GM12878 (cell line): ENCODE measurements at regions of chr18 and their contacts with region 1.

Region 1: GRCh38 chr18:58117786-58118403 is 73.9 kb downstream of the NEDD4L start:
- DNase-seq: no peak
- ATAC-seq: no peak
- H3K4me3 ChIP-seq: no peak overlapping the region
- H3K27ac ChIP-seq: no peak overlapping the region
- H3K4me1 ChIP-seq: peaks cover 9% of the 10 kb centered on the region
- H3K27me3 ChIP-seq: no peaks in the 10 kb centered on the region
- CTCF ChIP-seq: no peak
- EP300 ChIP-seq: no peak
- POLR2A ChIP-seq: no peak
- RAD21 ChIP-seq: no peak

Region 2: GRCh38 chr18:57497372-57498294 is 620.3 kb before region 1 on chr18:
- CTCF ChIA-PET with region 1: no interaction called
- POLR2A ChIA-PET with region 1: no interaction called
- RAD21 ChIA-PET with region 1: no interaction called
- SMC1A ChIA-PET with region 1: no interaction called
- in situ Hi-C with region 1: no loop called
- intact Hi-C with region 1: no loop called
- DNase-seq: no peak
- ATAC-seq: no peak
- H3K4me3 ChIP-seq: no peak overlapping the region
- H3K27ac ChIP-seq: no peak overlapping the region
- H3K4me1 ChIP-seq: no peaks in the 10 kb centered on the region
- H3K27me3 ChIP-seq: no peaks in the 10 kb centered on the region; a peak in 2 of 4 replicates
- CTCF ChIP-seq: no peak
- EP300 ChIP-seq: no peak
- POLR2A ChIP-seq: no peak
- RAD21 ChIP-seq: no peak

Region 3: GRCh38 chr18:57881818-57882413 is 236.0 kb before region 1 on chr18:
- CTCF ChIA-PET with region 1: interaction called, 16 read pairs
- POLR2A ChIA-PET with region 1: no interaction called
- RAD21 ChIA-PET with region 1: interaction called, 10 read pairs
- SMC1A ChIA-PET with region 1: interaction called, 16 read pairs
- in situ Hi-C with region 1: loop called (anchors 10 kb)
- intact Hi-C with region 1: loop called (anchors 5 kb)
- DNase-seq: peak; percentile 32
- ATAC-seq: peak; percentile 98
- H3K4me3 ChIP-seq: no peak overlapping the region
- H3K27ac ChIP-seq: no peak overlapping the region
- H3K4me1 ChIP-seq: no peaks in the 10 kb centered on the region
- H3K27me3 ChIP-seq: no peaks in the 10 kb centered on the region
- CTCF ChIP-seq: peak; percentile 89 to 94 (median 90); a peak in 5 of 6 replicates
- EP300 ChIP-seq: no peak
- POLR2A ChIP-seq: no peak
- RAD21 ChIP-seq: peak; percentile 93

Region 4: DNA sequence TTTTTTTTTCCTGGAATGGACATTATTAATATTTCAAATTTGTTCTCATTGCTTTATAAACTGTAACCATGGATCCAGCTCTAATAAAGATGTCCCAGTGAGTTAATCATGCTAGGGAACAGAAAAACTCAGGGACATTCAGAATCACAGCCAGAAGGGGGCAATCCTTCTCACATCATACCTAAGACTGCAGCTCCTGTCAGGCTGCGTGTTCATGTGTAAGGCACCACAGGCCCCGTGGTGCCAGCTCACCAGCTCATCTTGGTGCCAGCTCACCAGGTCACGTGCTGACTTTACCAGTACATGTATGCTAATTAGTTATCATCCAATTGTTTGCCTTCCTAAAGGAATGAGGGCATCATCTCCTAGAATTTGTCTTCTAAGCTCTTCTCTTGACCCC is 158.6 kb before region 1 on chr18:
- CTCF ChIA-PET with region 1: interaction called, 30 read pairs
- POLR2A ChIA-PET with region 1: no interaction called
- RAD21 ChIA-PET with region 1: interaction called, 34 read pairs
- SMC1A ChIA-PET with region 1: interaction called, 15 read pairs
- in situ Hi-C with region 1: no loop called
- intact Hi-C with region 1: loop called (anchors 1 kb)
- DNase-seq: no peak
- ATAC-seq: peak; percentile 86
- H3K4me3 ChIP-seq: no peak overlapping the region
- H3K27ac ChIP-seq: no peak overlapping the region
- H3K4me1 ChIP-seq: no peaks in the 10 kb centered on the region
- H3K27me3 ChIP-seq: 0 out of 4 replicates have a peak, but pooled peaks cover 0 to 2% of the 10 kb centered on the region in 2 experiments
- CTCF ChIP-seq: peak; percentile 45 to 54 (median 49); a peak in 5 of 6 replicates
- EP300 ChIP-seq: no peak
- POLR2A ChIP-seq: no peak
- RAD21 ChIP-seq: 0 out of 2 replicates have a peak, but pooled peaks have one; percentile 27

Region 5: DNA sequence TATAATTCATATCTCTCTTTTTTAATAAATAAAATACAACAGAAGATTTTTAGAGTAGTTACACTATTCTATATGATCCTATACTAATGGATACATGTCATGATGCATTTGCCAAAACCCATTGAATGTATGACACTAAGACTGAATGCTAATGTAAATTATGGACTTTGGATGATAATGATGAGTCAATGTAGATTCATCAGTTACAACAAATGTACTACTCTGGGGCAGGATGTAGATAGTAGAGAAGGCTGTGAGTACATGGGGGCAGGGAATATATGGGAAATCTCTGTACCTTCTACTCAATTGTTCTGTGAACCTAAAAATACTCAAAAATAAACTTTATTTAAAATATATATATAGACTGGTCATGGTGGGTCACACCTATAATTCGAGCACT is 119.4 kb before region 1 on chr18:
- CTCF ChIA-PET with region 1: no interaction called
- POLR2A ChIA-PET with region 1: no interaction called
- RAD21 ChIA-PET with region 1: no interaction called
- SMC1A ChIA-PET with region 1: no interaction called
- in situ Hi-C with region 1: no loop called
- intact Hi-C with region 1: no loop called
- DNase-seq: no peak
- ATAC-seq: no peak
- H3K4me3 ChIP-seq: no peak overlapping the region
- H3K27ac ChIP-seq: no peak overlapping the region
- H3K4me1 ChIP-seq: no peaks in the 10 kb centered on the region
- H3K27me3 ChIP-seq: no peaks in the 10 kb centered on the region; a peak in 1 of 4 replicates
- CTCF ChIP-seq: no peak
- EP300 ChIP-seq: no peak
- POLR2A ChIP-seq: no peak
- RAD21 ChIP-seq: no peak

Region 6: DNA sequence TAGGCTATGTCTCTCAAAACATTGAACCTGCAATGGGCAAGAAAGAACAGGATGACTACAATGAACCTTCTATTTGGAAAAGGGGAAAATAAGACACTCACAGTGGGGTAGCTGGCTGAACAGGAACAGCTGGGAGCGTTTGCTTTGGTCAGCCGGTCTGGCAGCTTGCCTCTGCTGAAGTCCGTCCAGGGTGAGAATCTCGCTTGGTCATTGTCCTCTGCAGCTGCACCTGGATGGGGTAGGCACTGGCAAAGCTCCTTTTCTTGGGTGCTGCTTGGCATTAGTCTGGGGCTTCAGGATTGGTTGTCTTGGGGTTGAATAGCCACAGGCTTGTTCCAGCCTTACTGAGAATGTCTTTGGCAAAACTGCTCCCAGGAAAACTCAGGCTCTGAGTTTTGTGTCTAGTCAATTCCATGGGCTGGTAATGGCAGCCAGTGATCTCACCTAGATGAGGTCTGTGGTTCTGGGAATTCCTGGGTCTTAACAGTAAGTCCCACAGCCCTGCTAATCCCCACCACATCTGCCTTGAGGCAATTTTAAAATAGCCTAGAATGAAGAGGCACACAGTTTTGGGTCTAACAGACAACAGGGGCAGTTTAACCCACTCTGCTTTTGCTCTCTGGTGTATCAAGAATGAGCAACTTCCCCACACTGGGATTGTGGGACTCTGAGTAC is 60.5 kb before region 1 on chr18:
- CTCF ChIA-PET with region 1: interaction called, 113 read pairs
- POLR2A ChIA-PET with region 1: interaction called, 6 read pairs
- RAD21 ChIA-PET with region 1: interaction called, 44 read pairs
- SMC1A ChIA-PET with region 1: interaction called, 55 read pairs
- in situ Hi-C with region 1: no loop called
- intact Hi-C with region 1: no loop called
- DNase-seq: no peak
- ATAC-seq: no peak
- H3K4me3 ChIP-seq: no peak overlapping the region
- H3K27ac ChIP-seq: no peak overlapping the region
- H3K4me1 ChIP-seq: no peaks in the 10 kb centered on the region
- H3K27me3 ChIP-seq: no peaks in the 10 kb centered on the region
- CTCF ChIP-seq: no peak
- EP300 ChIP-seq: no peak
- POLR2A ChIP-seq: no peak
- RAD21 ChIP-seq: no peak

Region 7: GRCh38 chr18:58091099-58091611 is 26.7 kb before region 1 on chr18:
- CTCF ChIA-PET with region 1: interaction called, 14 read pairs
- POLR2A ChIA-PET with region 1: interaction called, 19 read pairs
- RAD21 ChIA-PET with region 1: interaction called, 4 read pairs
- SMC1A ChIA-PET with region 1: interaction called, 78 read pairs
- in situ Hi-C with region 1: no loop called
- intact Hi-C with region 1: no loop called
- DNase-seq: peak; percentile 72
- ATAC-seq: peak; percentile 97
- H3K4me3 ChIP-seq: no peak overlapping the region
- H3K27ac ChIP-seq: peak overlapping the region; percentile 52
- H3K4me1 ChIP-seq: peaks cover 14% of the 10 kb centered on the region
- H3K27me3 ChIP-seq: no peaks in the 10 kb centered on the region
- CTCF ChIP-seq: no peak
- EP300 ChIP-seq: no peak
- POLR2A ChIP-seq: no peak
- RAD21 ChIP-seq: no peak

Region 8: DNA sequence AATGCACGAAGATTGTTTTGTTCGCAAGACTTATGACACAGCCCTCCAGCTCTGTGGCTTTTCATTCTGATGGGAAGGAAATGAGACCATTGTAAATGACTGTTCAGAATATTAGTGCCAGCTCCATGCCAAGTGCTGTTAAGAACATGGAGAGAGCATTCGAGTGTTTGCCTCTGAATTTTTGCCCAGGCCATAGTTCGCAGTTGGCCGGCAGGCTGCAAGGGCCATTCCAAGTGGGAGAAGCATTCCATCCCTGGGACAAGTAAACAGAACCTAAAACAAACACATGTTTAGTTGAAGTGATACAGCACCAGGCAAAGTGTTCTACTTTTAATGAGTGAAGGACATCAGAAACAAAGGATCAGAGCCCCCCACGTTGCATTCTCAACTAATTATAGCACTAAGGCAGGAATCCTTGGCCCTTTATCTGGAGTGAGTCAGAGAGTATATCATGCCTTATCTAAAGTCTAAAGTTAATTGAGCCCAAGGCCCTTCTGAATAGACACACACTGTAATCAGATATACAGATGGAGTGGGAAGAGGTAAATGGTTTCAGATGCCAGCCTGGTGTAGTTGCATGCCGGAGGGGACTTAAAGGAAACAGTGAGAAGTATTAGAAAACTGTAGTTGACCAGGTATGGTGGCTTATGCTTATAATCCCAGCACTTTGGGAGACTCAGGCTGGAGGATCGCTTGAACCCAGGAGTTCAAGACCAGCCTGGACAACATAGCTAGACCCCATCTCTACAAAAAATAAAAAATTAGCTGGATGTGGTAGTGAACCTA is 20.6 kb before region 1 on chr18:
- CTCF ChIA-PET with region 1: interaction called, 14 read pairs
- POLR2A ChIA-PET with region 1: interaction called, 46 read pairs
- RAD21 ChIA-PET with region 1: interaction called, 53 read pairs
- SMC1A ChIA-PET with region 1: interaction called, 78 read pairs
- in situ Hi-C with region 1: no loop called
- intact Hi-C with region 1: no loop called
- DNase-seq: no peak
- ATAC-seq: no peak
- H3K4me3 ChIP-seq: no peak overlapping the region
- H3K27ac ChIP-seq: no peak overlapping the region
- H3K4me1 ChIP-seq: peaks cover 11% of the 10 kb centered on the region
- H3K27me3 ChIP-seq: no peaks in the 10 kb centered on the region
- CTCF ChIP-seq: no peak
- EP300 ChIP-seq: no peak
- POLR2A ChIP-seq: no peak
- RAD21 ChIP-seq: no peak